Psoas muscle (tissue), 8 donors: ENCODE measurements at regions of chr1 and their contacts with region 1.

Region 1: GRCh38 chr1:31548907-31549808 is 27.2 kb upstream of the TINAGL1 start:
- DNase-seq: peak; percentile 84 to 85
- ATAC-seq: peak; percentile 89 to 95 (median 92)
- H3K4me3 ChIP-seq: peak overlapping the region; percentile 36
- H3K27ac ChIP-seq: peak overlapping the region; percentile 70
- H3K4me1 ChIP-seq: no peaks in the 10 kb centered on the region
- H3K27me3 ChIP-seq: peaks cover 0 to 3% (median 0%) of the 10 kb centered on the region in 3 donors
- CTCF ChIP-seq: peak; percentile 96

Region 2: DNA sequence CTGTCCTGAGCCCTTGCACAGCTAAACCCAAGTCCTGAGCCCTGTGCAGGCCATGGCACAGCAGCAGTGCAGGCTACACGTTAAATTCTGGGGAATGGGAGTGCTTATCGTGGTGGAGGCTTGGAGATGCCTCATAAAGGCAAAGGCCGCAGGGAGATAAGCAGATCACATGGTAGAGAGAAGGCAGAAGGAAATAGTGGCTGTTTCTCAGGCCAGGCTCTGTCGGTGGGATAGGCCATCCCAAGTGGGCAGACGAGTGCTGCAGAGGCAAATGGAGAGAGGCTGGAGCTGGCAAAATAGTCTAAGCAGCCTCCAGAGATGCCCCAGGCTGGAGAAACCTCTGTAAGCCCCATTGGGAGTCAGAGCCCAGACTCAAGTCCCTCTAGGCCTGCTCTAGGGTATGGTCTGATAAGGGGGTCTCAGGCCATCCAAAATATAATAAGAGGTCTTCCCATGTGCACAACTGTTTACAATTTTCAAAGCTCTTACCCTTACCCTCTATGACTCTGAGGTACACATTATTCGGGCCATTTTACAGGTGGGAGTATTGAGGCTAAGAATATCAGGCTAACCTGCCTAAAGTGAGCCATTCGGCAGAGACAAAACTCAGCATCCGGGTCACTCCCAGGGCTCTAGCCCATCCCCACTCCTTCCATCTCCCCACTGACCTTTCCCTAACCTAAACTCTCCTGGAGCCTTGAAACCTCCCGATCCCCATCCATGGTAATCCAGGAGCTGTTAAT is 389.1 kb before region 1 on chr1:
- intact Hi-C with region 1: loop called (anchors 5 kb)
- DNase-seq: no peak
- ATAC-seq: no peak
- H3K4me3 ChIP-seq: no peak overlapping the region
- H3K27ac ChIP-seq: no peak overlapping the region
- H3K4me1 ChIP-seq: no peaks in the 10 kb centered on the region
- H3K27me3 ChIP-seq: no peaks in the 10 kb centered on the region
- CTCF ChIP-seq: no peak

Region 3: GRCh38 chr1:31182352-31182751 is 366.8 kb before region 1 on chr1:
- intact Hi-C with region 1: loop called in 1 of 2 experiments (anchors 1 kb)
- DNase-seq: peak; percentile 86 to 94
- ATAC-seq: peak; percentile 93 to 94 (median 93)
- H3K4me3 ChIP-seq: peak overlapping the region; percentile 55
- H3K27ac ChIP-seq: peak overlapping the region; percentile 52
- H3K4me1 ChIP-seq: peaks cover 12% of the 10 kb centered on the region
- H3K27me3 ChIP-seq: no peaks in the 10 kb centered on the region
- CTCF ChIP-seq: peak; percentile 48

Region 4: GRCh38 chr1:31422505-31423319 is 126.4 kb before region 1 on chr1:
- intact Hi-C with region 1: loop called in 1 of 2 experiments (anchors 10 kb)
- DNase-seq: peak; percentile 80 to 89
- ATAC-seq: peak; percentile 91 to 97 (median 93)
- H3K4me3 ChIP-seq: peak overlapping the region; percentile 15
- H3K27ac ChIP-seq: peak overlapping the region; percentile 89
- H3K4me1 ChIP-seq: peaks cover 22% of the 10 kb centered on the region
- H3K27me3 ChIP-seq: no peaks in the 10 kb centered on the region
- CTCF ChIP-seq: peak; percentile 94

Region 5: GRCh38 chr1:31505911-31506497 is 43.2 kb before region 1 on chr1:
- intact Hi-C with region 1: no loop called
- DNase-seq: no peak
- ATAC-seq: no peak
- H3K4me3 ChIP-seq: no peak overlapping the region
- H3K27ac ChIP-seq: no peak overlapping the region
- H3K4me1 ChIP-seq: no peaks in the 10 kb centered on the region
- H3K27me3 ChIP-seq: peaks cover 0 to 20% (median 0%) of the 10 kb centered on the region in 3 donors
- CTCF ChIP-seq: no peak